ENCODE measurements at regions of chr15 and their contacts with region 1.

Region 1: GRCh38 chr15:59688841-59689625 is at the start of gene BNIP2:
- DNase-seq: peak; percentile 98 to 100
- ATAC-seq: peak; percentile 95 to 98
- H3K4me3 ChIP-seq: peak within 1 kb of the TSS; percentile 80
- H3K27ac ChIP-seq: peak within 1 kb of the TSS; percentile 94 to 97
- H3K4me1 ChIP-seq: peaks cover 29% of the 10 kb centered on the region
- CTCF ChIP-seq: no peak
- EP300 ChIP-seq: 0 out of 5 replicates have a peak, but pooled peaks of 1 of the 2 experiments have one; percentile 15
- POLR2A ChIP-seq: peak; percentile 56
- RAD21 ChIP-seq: no peak
- polyA plus RNA-seq, gene BNIP2: 93.6 and 146 TPM in 2 replicates

Region 2: DNA sequence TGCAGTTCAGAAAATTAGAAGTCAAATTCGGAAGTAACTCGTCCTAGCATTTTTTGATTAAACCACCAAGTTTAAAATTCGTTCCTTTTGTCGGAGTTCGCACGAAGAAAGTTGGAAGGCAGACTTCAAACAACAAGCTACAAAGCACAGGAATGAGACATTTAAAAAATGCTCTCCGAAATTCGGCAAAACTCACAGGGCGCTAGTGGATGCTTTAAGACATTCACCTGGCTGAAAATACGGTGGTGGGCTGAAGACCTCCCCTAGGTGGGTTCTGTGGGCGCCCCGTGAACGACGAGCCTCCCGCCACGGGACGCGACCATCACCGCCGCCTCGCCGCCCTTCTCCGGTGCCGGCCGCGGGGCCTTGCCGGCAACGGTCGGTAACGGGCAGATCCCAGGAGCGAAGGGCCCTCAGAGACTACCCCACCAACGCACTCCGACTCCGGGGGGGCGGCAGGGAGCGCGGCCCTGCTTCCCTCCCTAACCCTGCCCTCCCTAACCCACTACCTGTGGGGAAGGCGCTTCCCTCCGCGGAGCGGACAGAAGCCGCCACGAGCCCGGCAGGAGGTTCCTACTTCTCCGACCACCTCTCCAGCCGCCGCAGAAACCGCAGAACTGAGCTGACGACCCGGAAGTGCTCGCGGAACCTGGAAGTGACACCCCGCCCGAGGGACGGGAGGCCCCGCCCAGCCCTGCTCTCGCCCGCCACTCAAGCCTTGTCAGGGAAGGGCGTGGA is 32.0 kb before region 1 on chr15 and contains the start of gene GTF2A2:
- CTCF ChIA-PET with region 1: interaction called, 3 read pairs
- POLR2A ChIA-PET with region 1: interaction called, 13 read pairs
- DNase-seq: peak; percentile 95 to 96
- ATAC-seq: peak; percentile 98 to 100
- H3K4me3 ChIP-seq: peak within 1 kb of the TSS; percentile 95
- H3K27ac ChIP-seq: peak within 1 kb of the TSS; percentile 91 to 93
- H3K4me1 ChIP-seq: peaks cover 12% of the 10 kb centered on the region
- CTCF ChIP-seq: no peak
- EP300 ChIP-seq: no peak
- POLR2A ChIP-seq: peak; percentile 83
- RAD21 ChIP-seq: 0 out of 5 replicates have a peak, but pooled peaks of 1 of the 2 experiments have one; percentile 11
- polyA plus RNA-seq, gene GTF2A2: 137 and 220 TPM in 2 replicates

Region 3: DNA sequence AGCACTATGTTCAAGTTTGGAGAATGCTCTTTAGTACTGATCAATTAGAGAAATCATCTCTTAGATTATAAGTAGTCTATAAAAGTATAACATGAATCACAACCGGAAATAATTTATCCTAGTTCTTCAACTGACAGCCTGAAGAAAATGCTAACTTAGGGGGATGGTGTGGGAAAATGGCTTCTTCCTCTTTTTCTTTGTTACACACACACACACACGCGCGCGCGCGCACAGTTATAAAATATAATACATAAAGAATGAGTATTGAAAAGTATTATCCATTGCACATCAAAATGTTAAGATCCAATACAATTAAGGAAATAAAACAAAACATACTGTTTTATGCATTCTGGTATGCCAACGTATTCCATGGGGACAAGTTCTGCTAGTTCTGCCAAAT is 20.5 kb before region 1 on chr15:
- CTCF ChIA-PET with region 1: no interaction called
- POLR2A ChIA-PET with region 1: no interaction called
- DNase-seq: no peak
- ATAC-seq: no peak
- H3K4me3 ChIP-seq: no peak overlapping the region
- H3K27ac ChIP-seq: no peak overlapping the region
- H3K4me1 ChIP-seq: no peaks in the 10 kb centered on the region
- CTCF ChIP-seq: no peak
- EP300 ChIP-seq: no peak
- POLR2A ChIP-seq: no peak
- RAD21 ChIP-seq: no peak

Region 4: GRCh38 chr15:59711451-59712243 is 22.6 kb after region 1 on chr15:
- CTCF ChIA-PET with region 1: interaction called, 15 read pairs
- POLR2A ChIA-PET with region 1: no interaction called
- DNase-seq: no peak
- ATAC-seq: peak; percentile 34 to 55; a peak in 1 of 6 replicates
- H3K4me3 ChIP-seq: no peak overlapping the region
- H3K27ac ChIP-seq: no peak overlapping the region
- H3K4me1 ChIP-seq: no peaks in the 10 kb centered on the region
- CTCF ChIP-seq: no peak
- EP300 ChIP-seq: no peak
- POLR2A ChIP-seq: no peak
- RAD21 ChIP-seq: no peak

Region 5: GRCh38 chr15:60315878-60316277 is 626.8 kb after region 1 on chr15:
- CTCF ChIA-PET with region 1: interaction called, 13 read pairs
- POLR2A ChIA-PET with region 1: no interaction called
- DNase-seq: no peak
- ATAC-seq: no peak
- H3K4me3 ChIP-seq: no peak overlapping the region
- H3K27ac ChIP-seq: no peak overlapping the region
- H3K4me1 ChIP-seq: no peaks in the 10 kb centered on the region
- CTCF ChIP-seq: no peak
- EP300 ChIP-seq: no peak
- POLR2A ChIP-seq: no peak
- RAD21 ChIP-seq: no peak

Region 6: DNA sequence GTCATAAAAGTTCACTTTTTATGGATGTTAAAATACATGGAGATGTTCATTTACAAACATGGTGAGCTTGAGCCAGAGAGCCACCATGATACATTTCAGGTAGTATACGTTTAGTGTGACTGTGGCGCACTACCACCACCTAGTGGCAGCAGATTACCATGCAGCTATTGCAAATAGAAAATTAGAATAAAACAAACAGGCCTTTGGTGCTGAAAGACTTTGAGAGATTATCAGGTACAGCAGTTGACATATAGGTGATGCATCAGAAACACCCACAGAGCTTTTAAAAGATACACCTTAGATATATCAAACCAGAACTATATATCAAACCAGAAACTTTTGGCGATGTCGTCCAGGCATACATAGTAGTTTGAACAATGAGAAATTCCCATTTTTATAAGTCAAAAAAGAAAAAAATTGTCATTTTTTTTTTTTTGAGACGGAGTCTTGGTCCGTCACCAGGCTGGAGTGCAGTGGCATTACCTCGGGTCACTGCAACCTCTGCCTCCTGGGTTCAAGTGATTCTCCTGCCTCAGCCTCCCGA is 831.9 kb after region 1 on chr15:
- CTCF ChIA-PET with region 1: interaction called, 27 read pairs
- POLR2A ChIA-PET with region 1: no interaction called
- DNase-seq: peak; percentile 68 to 84
- ATAC-seq: peak; percentile 91 to 93
- H3K4me3 ChIP-seq: no peak overlapping the region
- H3K27ac ChIP-seq: no peak overlapping the region
- H3K4me1 ChIP-seq: peaks cover 13% of the 10 kb centered on the region
- CTCF ChIP-seq: peak; percentile 98
- EP300 ChIP-seq: no peak
- POLR2A ChIP-seq: no peak
- RAD21 ChIP-seq: peak; percentile 94 to 98

Measured in A549 (cell line).